ENCODE measurements at regions of chr6 and their contacts with region 1.

Region 1: GRCh38 chr6:30571075-30571768 is at the start of gene ABCF1:
- H3K4me3 ChIP-seq: peak within 1 kb of the TSS; percentile 94
- H3K27ac ChIP-seq: peak within 1 kb of the TSS; percentile 64
- H3K4me1 ChIP-seq: peaks cover 9% of the 10 kb centered on the region; the same call in 1 of the 2 replicates
- CTCF ChIP-seq: no peak

Region 2: DNA sequence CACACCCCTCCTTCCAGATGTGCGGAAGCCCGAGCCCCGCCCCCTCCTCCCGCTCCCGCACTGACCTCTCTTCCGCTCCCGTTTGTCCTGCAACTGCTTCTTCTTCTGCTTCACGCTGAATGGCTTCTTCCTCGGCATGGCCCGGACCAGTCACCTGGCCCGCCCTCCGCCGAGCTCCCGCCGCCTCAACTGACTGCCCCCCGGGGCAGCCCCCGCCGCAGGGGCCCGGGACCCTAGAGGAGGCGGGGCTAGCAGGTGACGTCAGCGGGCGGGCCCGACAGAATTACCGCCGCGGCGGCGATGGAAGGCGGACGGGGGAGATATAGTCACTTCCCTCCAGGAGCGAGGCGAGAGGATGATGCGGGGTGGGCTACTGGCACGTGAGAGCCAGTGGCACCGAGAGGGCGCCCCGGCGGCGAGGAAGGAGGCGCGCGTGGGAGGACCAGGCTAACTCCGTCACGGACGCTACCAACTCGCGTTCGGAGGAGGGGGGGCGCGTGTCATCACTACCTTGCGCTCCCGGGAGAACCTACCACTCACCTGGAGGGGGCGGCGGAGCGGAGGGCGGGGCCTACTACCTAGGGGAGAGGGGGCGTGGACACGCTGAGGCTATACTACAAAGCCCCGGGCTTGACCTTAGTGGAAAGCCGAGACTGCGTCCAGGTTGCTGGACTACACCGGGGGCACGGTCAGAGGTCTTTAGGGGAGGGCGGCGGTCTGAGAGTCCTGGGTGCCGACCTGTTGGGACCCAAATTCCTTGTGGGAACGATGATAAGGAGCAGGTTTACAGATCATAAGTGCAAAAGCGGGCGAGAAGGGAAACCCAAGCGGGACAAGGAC is 14.9 kb before region 1 on chr6 and contains the start of gene GNL1:
- CTCF ChIA-PET with region 1: interaction called, 7 read pairs
- POLR2A ChIA-PET with region 1: interaction called, 41 read pairs
- H3K4me3 ChIP-seq: peak within 1 kb of the TSS; percentile 86
- H3K27ac ChIP-seq: peak within 1 kb of the TSS; percentile 74
- H3K4me1 ChIP-seq: 0 out of 2 replicates have a peak, but pooled peaks cover 3% of the 10 kb centered on the region
- CTCF ChIP-seq: peak; percentile 62

Region 3: DNA sequence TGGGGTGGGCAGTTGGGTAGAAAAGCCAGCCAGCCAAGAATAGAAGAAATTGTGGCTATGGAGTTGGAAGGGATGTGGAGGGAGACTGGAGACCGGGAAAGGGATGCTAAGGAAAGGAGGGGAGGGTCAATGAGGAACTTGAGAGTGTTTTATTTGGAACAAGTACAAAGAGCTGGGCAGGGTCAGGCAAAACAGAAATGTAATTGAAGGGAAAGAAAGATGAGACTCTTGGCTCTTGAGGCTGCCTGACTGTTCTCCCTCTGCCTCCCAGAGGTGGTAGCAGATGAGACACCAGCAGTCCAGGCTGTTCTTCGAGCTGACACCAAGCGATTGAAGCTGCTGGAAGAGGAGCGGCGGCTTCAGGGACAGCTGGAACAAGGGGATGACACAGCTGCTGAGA is 12.7 kb after region 1 on chr6:
- CTCF ChIA-PET with region 1: no interaction called
- POLR2A ChIA-PET with region 1: interaction called, 10 read pairs
- H3K4me3 ChIP-seq: no peak overlapping the region
- H3K27ac ChIP-seq: no peak overlapping the region
- H3K4me1 ChIP-seq: no peaks in the 10 kb centered on the region
- CTCF ChIP-seq: no peak

Region 4: DNA sequence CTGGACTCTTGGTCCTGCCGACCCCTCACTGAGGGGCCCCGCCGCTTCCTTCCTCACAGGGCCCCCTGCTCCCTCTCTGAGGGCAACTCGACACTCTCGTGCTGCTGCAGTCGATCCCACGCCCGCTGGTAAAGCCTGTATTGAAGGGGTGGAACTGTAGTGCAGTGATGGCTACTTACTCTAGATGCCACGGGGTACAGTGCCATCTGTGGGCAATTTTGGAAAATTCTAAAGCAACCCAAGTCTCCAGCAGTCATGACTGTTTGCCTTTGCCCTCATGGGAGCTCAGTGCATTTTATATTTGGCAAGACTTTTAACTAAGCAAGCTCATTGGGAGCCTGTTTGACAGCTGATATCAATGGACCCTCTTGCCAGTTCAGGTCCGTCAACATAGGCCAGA is 69.3 kb after region 1 on chr6:
- CTCF ChIA-PET with region 1: no interaction called
- POLR2A ChIA-PET with region 1: no interaction called
- H3K4me3 ChIP-seq: no peak overlapping the region
- H3K27ac ChIP-seq: no peak overlapping the region
- H3K4me1 ChIP-seq: no peaks in the 10 kb centered on the region
- CTCF ChIP-seq: no peak

Region 5: DNA sequence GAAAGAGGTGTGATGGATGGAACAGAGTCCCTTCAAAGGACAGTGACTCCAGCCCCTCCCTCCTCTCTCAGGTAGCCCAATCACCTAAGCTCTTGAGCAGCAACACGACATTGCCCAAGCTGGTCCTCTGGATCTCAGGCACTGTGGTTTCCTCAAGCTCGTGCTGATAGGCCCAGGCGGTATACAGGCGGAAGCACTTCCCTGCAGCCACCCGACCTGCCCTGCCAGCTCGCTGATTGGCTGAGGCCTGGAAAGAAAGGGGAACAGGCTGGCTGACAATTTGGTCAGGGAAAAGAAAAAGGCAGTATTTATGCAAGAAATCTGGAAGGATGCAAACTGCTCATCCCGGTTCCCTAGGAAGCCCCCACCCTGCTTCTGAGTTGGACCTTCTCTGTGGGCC is 85.3 kb after region 1 on chr6:
- CTCF ChIA-PET with region 1: no interaction called
- POLR2A ChIA-PET with region 1: no interaction called
- H3K4me3 ChIP-seq: no peak overlapping the region
- H3K27ac ChIP-seq: no peak overlapping the region
- H3K4me1 ChIP-seq: no peaks in the 10 kb centered on the region
- CTCF ChIP-seq: no peak